Ovary (tissue), 10 donors: ENCODE measurements at regions of chr12 and their contacts with region 1.

Region 1: GRCh38 chr12:75480469-75480949 is at the start of gene GLIPR1:
- DNase-seq: peak; percentile 69 to 81 (median 76)
- H3K4me3 ChIP-seq: peak within 1 kb of the TSS; percentile 50
- H3K27ac ChIP-seq: peak within 1 kb of the TSS in 1 of 2 donors; percentile 68
- H3K4me1 ChIP-seq: peaks cover 5% of the 10 kb centered on the region
- H3K27me3 ChIP-seq: no peaks in the 10 kb centered on the region
- CTCF ChIP-seq: no peak
- EP300 ChIP-seq: no peak
- POLR2A ChIP-seq: peak; percentile 48
- total RNA-seq, gene GLIPR1: 8.5 to 53.4 (median 27.9) TPM

Region 2: DNA sequence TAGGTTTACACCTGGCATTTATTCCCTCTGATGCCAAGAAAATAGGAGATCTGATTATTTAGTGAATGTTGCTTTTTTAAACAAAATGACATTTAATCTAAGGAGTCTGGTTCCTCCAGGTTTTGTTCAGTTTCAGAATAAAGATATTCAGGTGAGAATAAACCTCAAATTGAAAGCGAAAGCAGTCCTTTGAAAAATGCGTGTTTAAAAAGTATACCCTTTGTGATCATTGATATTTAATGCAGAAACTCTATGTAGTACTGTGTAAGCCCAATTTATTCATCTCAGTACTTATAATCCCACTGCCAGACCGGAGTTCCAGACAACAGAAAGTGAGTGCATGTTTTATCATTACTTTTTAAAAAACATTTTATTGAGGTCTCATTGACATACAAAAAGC is 481.0 kb before region 1 on chr12:
- intact Hi-C with region 1: no loop called
- DNase-seq: no peak
- H3K4me3 ChIP-seq: no peak overlapping the region
- H3K27ac ChIP-seq: no peak overlapping the region
- H3K4me1 ChIP-seq: no peaks in the 10 kb centered on the region
- H3K27me3 ChIP-seq: no peaks in the 10 kb centered on the region
- CTCF ChIP-seq: no peak
- EP300 ChIP-seq: no peak
- POLR2A ChIP-seq: no peak

Region 3: DNA sequence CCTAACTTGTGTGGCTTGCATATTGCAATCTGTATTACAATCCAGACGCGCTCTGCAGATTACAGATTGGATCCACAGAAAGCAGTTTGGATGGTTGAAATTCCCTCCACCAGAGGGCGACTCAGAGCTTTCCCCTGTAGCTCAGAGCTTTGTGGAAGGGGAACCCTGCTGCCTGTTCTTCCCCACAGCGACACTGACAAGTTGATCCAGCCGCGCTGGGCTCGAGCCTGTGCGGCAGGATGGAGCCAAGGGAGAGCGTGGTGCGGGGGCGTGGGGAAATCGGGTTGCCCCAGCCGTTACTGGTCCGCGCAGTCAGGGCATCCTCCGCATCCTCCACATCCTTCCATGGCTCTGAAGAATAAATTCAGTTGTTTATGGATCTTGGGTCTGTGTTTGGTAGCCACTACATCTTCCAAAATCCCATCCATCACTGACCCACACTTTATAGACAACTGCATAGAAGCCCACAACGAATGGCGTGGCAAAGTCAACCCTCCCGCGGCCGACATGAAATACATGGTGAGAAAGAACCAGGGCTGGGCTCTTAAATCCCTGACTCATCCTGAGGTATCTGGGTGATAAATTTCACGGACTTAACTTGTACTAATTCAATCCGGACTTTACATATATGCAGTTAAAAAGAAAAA is 146.0 kb before region 1 on chr12 and contains the start of gene GLIPR1L1:
- intact Hi-C with region 1: loop called in 2 of 4 experiments (anchors 10 kb)
- DNase-seq: peak; percentile 76 to 89 (median 79)
- H3K4me3 ChIP-seq: peak within 1 kb of the TSS; percentile 31
- H3K27ac ChIP-seq: no peak within 1 kb of the TSS
- H3K4me1 ChIP-seq: no peaks in the 10 kb centered on the region
- H3K27me3 ChIP-seq: no peaks in the 10 kb centered on the region
- CTCF ChIP-seq: peak; percentile 75 to 90 (median 81)
- EP300 ChIP-seq: no peak
- POLR2A ChIP-seq: no peak
- total RNA-seq, gene GLIPR1L1: not detected

Region 4: DNA sequence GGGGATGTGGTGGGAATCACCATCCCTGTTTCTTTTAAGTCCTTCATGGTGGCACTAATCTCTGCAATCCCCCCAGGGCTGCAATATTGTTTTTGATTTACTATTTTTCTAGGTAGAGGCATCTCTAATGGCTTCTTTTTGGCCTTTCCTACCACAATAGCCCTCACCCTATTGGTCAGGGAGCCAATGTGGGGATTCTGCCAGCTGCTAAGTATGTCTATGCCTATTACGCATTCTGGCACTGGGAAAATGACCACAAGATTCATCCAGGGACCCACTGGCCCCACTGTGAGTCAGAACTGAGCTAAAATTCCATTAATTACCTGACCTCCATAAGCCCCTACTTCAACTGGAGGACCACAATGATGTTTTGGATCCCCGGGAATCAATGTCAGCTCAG is 105.5 kb before region 1 on chr12:
- intact Hi-C with region 1: no loop called
- DNase-seq: no peak
- H3K4me3 ChIP-seq: no peak overlapping the region
- H3K27ac ChIP-seq: no peak overlapping the region
- H3K4me1 ChIP-seq: no peaks in the 10 kb centered on the region
- H3K27me3 ChIP-seq: no peaks in the 10 kb centered on the region
- CTCF ChIP-seq: no peak
- EP300 ChIP-seq: no peak
- POLR2A ChIP-seq: no peak

Region 5: GRCh38 chr12:77031745-77032144 is 1551.2 kb after region 1 on chr12:
- intact Hi-C with region 1: no loop called
- DNase-seq: no peak
- H3K4me3 ChIP-seq: no peak overlapping the region
- H3K27ac ChIP-seq: no peak overlapping the region
- H3K4me1 ChIP-seq: no peaks in the 10 kb centered on the region
- H3K27me3 ChIP-seq: no peaks in the 10 kb centered on the region
- CTCF ChIP-seq: no peak
- EP300 ChIP-seq: no peak
- POLR2A ChIP-seq: no peak